CD4-positive, alpha-beta memory T cell (primary cell): ENCODE measurements at regions of chr1 and their contacts with region 1.

Region 1: DNA sequence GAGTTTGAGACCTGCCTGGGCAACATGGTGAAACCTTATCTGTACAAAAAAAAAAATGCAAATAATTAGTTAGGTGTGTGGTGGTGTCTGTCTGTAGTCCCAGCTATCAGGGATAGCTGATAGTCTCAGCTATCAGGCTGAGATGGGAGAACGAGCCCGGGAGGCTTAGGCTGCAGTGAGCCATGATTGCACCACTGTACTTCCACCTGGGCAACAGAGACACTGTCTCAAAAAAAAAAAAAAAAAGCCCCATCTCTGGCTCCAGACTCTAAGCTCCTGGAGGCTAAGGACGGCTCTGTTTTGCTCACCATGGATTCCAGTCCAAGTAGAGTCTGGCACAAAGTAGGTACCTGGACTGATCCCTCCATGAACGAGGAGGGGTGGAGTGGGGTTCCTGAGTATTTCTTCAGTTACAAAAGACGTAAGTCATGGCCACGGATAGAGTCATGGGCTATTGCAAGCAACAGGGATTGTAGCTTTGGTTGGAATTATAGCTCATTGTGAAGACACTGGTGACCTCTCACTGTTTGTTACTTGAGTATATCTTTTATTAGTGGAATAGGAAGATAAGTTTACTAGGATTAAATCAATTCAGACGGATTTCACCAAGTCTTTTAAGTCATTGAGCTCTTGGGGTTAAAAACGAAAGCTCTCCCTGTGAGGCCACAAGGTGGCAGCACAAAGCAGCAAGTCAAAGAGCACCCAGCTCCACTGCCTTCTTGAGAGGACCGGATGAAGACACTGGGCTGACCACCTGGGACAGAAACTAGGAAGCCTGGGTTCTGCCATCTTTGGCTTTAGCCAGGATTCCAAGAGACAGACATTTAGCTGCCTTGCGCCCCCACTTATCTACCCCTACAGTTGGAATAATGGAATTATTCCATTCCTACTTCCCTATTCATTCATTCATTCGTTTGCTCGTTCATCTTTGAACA is 35.6 kb upstream of the TMEM61 start:
- DNase-seq: peak; percentile 55 to 68 (median 60)
- H3K4me3 ChIP-seq: no peak overlapping the region
- H3K4me3 Mint-ChIP-seq: no peak overlapping the region
- H3K27ac ChIP-seq: no peak overlapping the region
- H3K27ac Mint-ChIP-seq: peak overlapping the region in 3 of 7 donors; percentile 3 to 86 (median 61)
- H3K4me1 ChIP-seq: peaks cover 7% of the 10 kb centered on the region
- H3K4me1 Mint-ChIP-seq: peaks cover 6 to 18% (median 14%) of the 10 kb centered on the region in 4 donors
- H3K27me3 ChIP-seq: no peaks in the 10 kb centered on the region
- H3K27me3 Mint-ChIP-seq: peaks cover 0 to 2% of the 10 kb centered on the region in 2 donors

Region 2: DNA sequence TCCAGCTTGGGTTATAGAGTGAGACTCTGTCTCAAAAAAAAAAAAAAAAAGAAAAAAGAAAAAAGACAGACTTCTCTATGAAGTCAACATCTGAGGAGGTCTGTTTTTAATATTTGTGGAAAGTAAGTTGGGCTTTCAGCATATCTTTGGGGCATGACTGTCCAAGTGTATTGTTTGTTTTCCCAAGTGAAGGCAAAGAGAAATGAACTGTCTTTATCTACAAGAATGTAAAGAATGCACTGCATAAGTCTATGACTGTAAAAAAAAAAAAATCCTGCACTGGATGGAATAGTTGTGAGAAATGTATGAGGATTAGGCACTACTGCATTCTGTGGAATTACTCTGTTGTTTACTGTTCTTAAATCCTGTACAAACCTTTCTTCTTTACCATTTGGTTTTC is 10.0 kb before region 1 on chr1:
- CTCF ChIA-PET with region 1: interaction called, 18 read pairs
- POLR2A ChIA-PET with region 1: no interaction called
- intact Hi-C with region 1: no loop called
- DNase-seq: no peak
- H3K4me3 ChIP-seq: no peak overlapping the region
- H3K4me3 Mint-ChIP-seq: no peak overlapping the region
- H3K27ac ChIP-seq: no peak overlapping the region
- H3K27ac Mint-ChIP-seq: no peak overlapping the region
- H3K4me1 ChIP-seq: no peaks in the 10 kb centered on the region
- H3K4me1 Mint-ChIP-seq: peaks cover 0 to 6% (median 3%) of the 10 kb centered on the region in 4 donors
- H3K27me3 ChIP-seq: no peaks in the 10 kb centered on the region
- H3K27me3 Mint-ChIP-seq: peaks cover 10 to 21% of the 10 kb centered on the region in 2 donors

Region 3: GRCh38 chr1:54959241-54959640 is 14.4 kb after region 1 on chr1:
- CTCF ChIA-PET with region 1: interaction called, 17 read pairs
- POLR2A ChIA-PET with region 1: no interaction called
- intact Hi-C with region 1: no loop called
- DNase-seq: no peak
- H3K4me3 ChIP-seq: no peak overlapping the region
- H3K4me3 Mint-ChIP-seq: no peak overlapping the region
- H3K27ac ChIP-seq: no peak overlapping the region
- H3K27ac Mint-ChIP-seq: no peak overlapping the region
- H3K4me1 ChIP-seq: no peaks in the 10 kb centered on the region
- H3K4me1 Mint-ChIP-seq: no peaks in the 10 kb centered on the region
- H3K27me3 ChIP-seq: no peaks in the 10 kb centered on the region
- H3K27me3 Mint-ChIP-seq: peaks cover 0 to 2% of the 10 kb centered on the region in 2 donors

Region 4: DNA sequence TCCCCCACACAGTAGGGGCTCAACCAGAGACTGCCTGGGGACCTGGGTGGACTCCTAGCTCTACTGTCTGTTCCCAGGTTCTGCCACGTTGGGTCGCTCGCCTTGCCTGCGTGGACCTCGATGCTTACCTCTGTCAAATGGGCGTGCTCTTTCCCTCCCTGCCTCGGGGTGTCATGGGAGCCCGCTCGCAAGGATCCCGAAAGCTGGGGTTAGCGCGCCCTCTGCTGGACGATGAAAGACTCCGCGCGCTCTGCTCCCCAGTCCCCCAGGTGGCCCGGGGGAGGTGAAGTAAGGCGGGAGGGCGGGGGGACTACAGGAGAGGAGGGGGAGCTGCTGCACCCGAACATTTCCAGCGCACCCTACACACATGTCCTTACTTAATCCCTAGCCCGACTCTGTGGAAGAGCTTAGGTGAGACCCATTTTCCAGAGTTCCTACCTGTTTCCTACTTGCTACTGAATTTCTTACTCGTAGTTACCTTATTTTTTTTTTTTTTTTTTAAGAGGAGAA is 51.5 kb after region 1 on chr1:
- CTCF ChIA-PET with region 1: interaction called, 337 read pairs
- POLR2A ChIA-PET with region 1: interaction called, 18 read pairs
- intact Hi-C with region 1: loop called (anchors 1 kb)
- DNase-seq: peak; percentile 76 to 83 (median 81)
- H3K4me3 ChIP-seq: peak overlapping the region in 1 of 2 donors; percentile 41
- H3K4me3 Mint-ChIP-seq: peak overlapping the region; percentile 50 to 80 (median 75)
- H3K27ac ChIP-seq: peak overlapping the region; percentile 23
- H3K27ac Mint-ChIP-seq: peak overlapping the region; percentile 84 to 95 (median 93)
- H3K4me1 ChIP-seq: peaks cover 22% of the 10 kb centered on the region
- H3K4me1 Mint-ChIP-seq: peaks cover 21 to 29% (median 21%) of the 10 kb centered on the region in 4 donors
- H3K27me3 ChIP-seq: peaks cover 7% of the 10 kb centered on the region
- H3K27me3 Mint-ChIP-seq: peaks cover 15 to 28% of the 10 kb centered on the region in 2 donors

Region 5: GRCh38 chr1:55021965-55022546 is 77.2 kb after region 1 on chr1:
- CTCF ChIA-PET with region 1: interaction called, 34 read pairs
- POLR2A ChIA-PET with region 1: no interaction called
- intact Hi-C with region 1: loop called (anchors 2 kb)
- DNase-seq: peak; percentile 28 to 53 (median 41)
- H3K4me3 ChIP-seq: no peak overlapping the region
- H3K4me3 Mint-ChIP-seq: no peak overlapping the region
- H3K27ac ChIP-seq: no peak overlapping the region
- H3K27ac Mint-ChIP-seq: no peak overlapping the region
- H3K4me1 ChIP-seq: no peaks in the 10 kb centered on the region
- H3K4me1 Mint-ChIP-seq: peaks cover 0 to 3% (median 1%) of the 10 kb centered on the region in 4 donors
- H3K27me3 ChIP-seq: no peaks in the 10 kb centered on the region
- H3K27me3 Mint-ChIP-seq: peaks cover 9 to 10% of the 10 kb centered on the region in 2 donors